ENCODE measurements at regions of chr6 and their contacts with region 1.

Region 1: DNA sequence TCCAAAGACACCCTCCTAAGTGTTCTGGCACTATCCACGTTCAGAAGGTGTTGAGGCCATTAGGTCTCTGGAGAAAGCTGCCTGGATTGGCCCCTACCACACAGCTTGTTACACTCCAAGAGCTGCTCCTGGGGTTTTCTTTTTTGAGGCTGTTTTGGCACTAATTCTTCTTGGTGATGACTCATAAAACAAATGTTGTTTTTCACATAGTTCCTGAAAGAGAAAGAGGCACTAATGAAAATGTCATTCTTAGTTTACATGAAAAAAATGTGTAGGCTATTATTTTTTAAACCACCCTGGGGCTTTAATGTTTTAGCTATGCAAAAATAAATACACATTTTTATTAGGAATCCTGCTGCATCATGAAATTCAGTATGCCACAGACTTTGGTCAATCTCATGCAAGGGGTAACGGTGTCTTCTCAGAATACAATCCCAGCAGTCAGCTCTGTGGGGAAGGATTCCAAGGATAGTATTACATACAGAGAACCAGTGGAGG is 38.1 kb downstream of the TBPL1 start:
- DNase-seq: peak in 1 of 4 experiments; percentile 25
- ATAC-seq: peak; percentile 61
- H3K4me3 ChIP-seq: no peak overlapping the region
- H3K27ac ChIP-seq: no peak overlapping the region
- H3K4me1 ChIP-seq: peaks cover 7 to 31% of the 10 kb centered on the region in 2 experiments
- H3K27me3 ChIP-seq: no peaks in the 10 kb centered on the region
- CTCF ChIP-seq: no peak
- EP300 ChIP-seq: no peak
- POLR2A ChIP-seq: no peak
- RAD21 ChIP-seq: no peak

Region 2: GRCh38 chr6:134002821-134003220 is 11.7 kb after region 1 on chr6:
- CTCF ChIA-PET with region 1: no interaction called
- POLR2A ChIA-PET with region 1: interaction called, 58 read pairs
- in situ Hi-C with region 1: no loop called
- intact Hi-C with region 1: no loop called
- DNase-seq: no peak
- ATAC-seq: peak; percentile 51
- H3K4me3 ChIP-seq: no peak overlapping the region
- H3K27ac ChIP-seq: no peak overlapping the region
- H3K4me1 ChIP-seq: peaks cover 0 to 3% of the 10 kb centered on the region in 2 experiments; a peak in 1 of 5 replicates
- H3K27me3 ChIP-seq: no peaks in the 10 kb centered on the region
- CTCF ChIP-seq: no peak
- EP300 ChIP-seq: no peak
- POLR2A ChIP-seq: no peak
- RAD21 ChIP-seq: no peak

Region 3: GRCh38 chr6:134063966-134064445 is 72.9 kb after region 1 on chr6:
- CTCF ChIA-PET with region 1: no interaction called
- POLR2A ChIA-PET with region 1: interaction called, 5 read pairs
- in situ Hi-C with region 1: no loop called
- intact Hi-C with region 1: loop called (anchors 5 kb)
- DNase-seq: peak; percentile 65 to 88 (median 74)
- ATAC-seq: peak; percentile 94
- H3K4me3 ChIP-seq: no peak overlapping the region
- H3K27ac ChIP-seq: peak overlapping the region; percentile 40; the same call in 1 of the 3 replicates
- H3K4me1 ChIP-seq: peaks cover 6 to 18% of the 10 kb centered on the region in 2 experiments; a peak in 3 of 5 replicates
- H3K27me3 ChIP-seq: no peaks in the 10 kb centered on the region
- CTCF ChIP-seq: peak; percentile 90 to 99 (median 99)
- EP300 ChIP-seq: no peak
- POLR2A ChIP-seq: no peak
- RAD21 ChIP-seq: peak; percentile 76 to 89